ENCODE measurements at regions of chr16 and their contacts with region 1.

Region 1: GRCh38 chr16:87471278-87472141 is 21.3 kb downstream of the ZCCHC14 start:
- DNase-seq: no peak
- H3K4me3 ChIP-seq: no peak overlapping the region
- CTCF ChIP-seq: no peak

Region 2: GRCh38 chr16:87416826-87417527 is 54.5 kb before region 1 on chr16:
- in situ Hi-C with region 1: loop called (anchors 5 kb)
- DNase-seq: peak; percentile 60
- H3K4me3 ChIP-seq: no peak overlapping the region
- CTCF ChIP-seq: peak; percentile 77

Region 3: DNA sequence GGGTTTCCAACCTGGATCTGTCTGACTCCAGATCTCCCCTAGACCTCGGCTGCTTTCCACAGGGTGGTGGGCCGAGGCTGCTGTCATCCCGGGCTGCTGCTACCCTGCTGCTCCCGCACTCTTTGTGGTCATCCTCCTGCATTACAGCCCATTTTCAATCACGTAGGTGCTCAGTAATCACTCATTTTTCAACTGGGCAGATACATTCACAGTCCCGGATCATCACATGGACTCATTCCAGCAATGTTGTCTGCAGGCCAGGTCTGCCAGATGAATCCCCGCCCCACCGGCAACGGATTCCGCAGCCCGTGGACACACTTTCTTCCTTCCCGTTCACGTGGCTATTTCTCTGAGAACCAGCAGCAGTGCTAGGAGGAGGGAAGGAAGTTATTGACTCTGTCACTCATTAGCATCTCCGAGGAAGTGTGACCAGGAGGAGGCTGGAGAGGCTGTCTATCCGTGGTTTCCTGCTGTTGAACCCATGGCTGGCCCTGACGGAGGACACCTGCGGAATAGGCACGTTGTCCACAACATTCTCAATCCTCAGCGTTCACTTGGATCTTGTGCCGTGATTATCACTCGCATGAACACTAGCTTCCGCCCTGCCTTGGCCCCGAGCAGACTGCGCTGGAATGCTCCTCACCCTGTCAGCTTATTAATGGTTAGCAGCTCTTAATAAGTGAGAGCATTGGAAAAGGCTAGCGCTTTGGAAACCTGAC is 36.0 kb after region 1 on chr16:
- in situ Hi-C with region 1: no loop called
- DNase-seq: no peak
- H3K4me3 ChIP-seq: no peak overlapping the region
- CTCF ChIP-seq: no peak

Measured in astrocyte of the cerebellum (primary cell).